Left ventricle myocardium superior (tissue), 1 donor: ENCODE measurements at regions of chr12 and their contacts with region 1.

Region 1: DNA sequence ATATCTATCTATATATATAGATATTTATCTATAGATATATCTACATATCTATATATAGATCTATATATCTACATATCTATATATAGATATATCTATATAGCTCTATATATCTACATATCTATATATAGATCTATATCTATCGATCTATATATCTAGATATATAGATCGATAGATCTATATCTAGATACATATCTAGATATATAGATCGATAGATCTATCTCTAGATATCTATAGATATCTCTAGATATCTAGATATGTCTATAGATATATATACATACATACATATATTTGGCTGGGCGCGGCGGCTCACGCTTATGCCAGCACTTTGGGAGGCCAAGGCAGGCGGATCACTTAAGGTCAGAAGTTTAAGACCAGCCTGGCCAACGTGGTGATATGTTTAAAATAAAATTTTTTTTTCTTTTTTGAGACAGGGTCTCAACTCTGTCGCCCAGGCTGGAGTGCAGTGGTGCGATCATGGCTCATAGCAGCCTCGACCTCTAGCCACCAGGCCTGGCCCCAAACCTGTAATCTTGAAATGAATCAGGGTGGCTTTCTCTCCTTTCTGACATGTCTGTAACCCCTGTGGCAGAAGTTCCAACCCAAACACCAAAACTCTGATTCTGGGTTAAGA is 18.1 kb downstream of the ARPC3 start:
- DNase-seq: peak; percentile 41
- ATAC-seq: no peak

Region 2: GRCh38 chr12:110100315-110100970 is 331.6 kb before region 1 on chr12:
- intact Hi-C with region 1: loop called (anchors 5 kb)
- DNase-seq: peak; percentile 62
- ATAC-seq: peak; percentile 70